Pancreas (tissue), 10 donors: ENCODE measurements at regions of chr17 and their contacts with region 1.

Region 1: GRCh38 chr17:27879987-27880608 is 13.1 kb downstream of the LYRM9 start:
- DNase-seq: peak; percentile 59 to 89 (median 74)
- ATAC-seq: peak; percentile 92 to 99 (median 98)
- H3K4me3 ChIP-seq: no peak overlapping the region
- H3K27ac ChIP-seq: no peak overlapping the region
- H3K4me1 ChIP-seq: no peaks in the 10 kb centered on the region
- H3K27me3 ChIP-seq: no peaks in the 10 kb centered on the region
- CTCF ChIP-seq: peak; percentile 61 to 82 (median 75)

Region 2: GRCh38 chr17:27666831-27667560 is 213.1 kb before region 1 on chr17:
- intact Hi-C with region 1: loop called in 1 of 3 experiments (anchors 10 kb)
- DNase-seq: peak in 1 of 6 donors; percentile 49
- ATAC-seq: no peak
- H3K4me3 ChIP-seq: no peak overlapping the region
- H3K27ac ChIP-seq: no peak overlapping the region
- H3K4me1 ChIP-seq: no peaks in the 10 kb centered on the region
- H3K27me3 ChIP-seq: no peaks in the 10 kb centered on the region
- CTCF ChIP-seq: no peak

Region 3: GRCh38 chr17:27760069-27760885 is 119.8 kb before region 1 on chr17:
- intact Hi-C with region 1: loop called in 1 of 3 experiments (anchors 5 kb)
- DNase-seq: peak; percentile 35 to 93 (median 74)
- ATAC-seq: peak; percentile 69 to 84 (median 79)
- H3K4me3 ChIP-seq: no peak overlapping the region
- H3K27ac ChIP-seq: no peak overlapping the region
- H3K4me1 ChIP-seq: no peaks in the 10 kb centered on the region
- H3K27me3 ChIP-seq: no peaks in the 10 kb centered on the region
- CTCF ChIP-seq: peak; percentile 80 to 96 (median 93)

Region 4: DNA sequence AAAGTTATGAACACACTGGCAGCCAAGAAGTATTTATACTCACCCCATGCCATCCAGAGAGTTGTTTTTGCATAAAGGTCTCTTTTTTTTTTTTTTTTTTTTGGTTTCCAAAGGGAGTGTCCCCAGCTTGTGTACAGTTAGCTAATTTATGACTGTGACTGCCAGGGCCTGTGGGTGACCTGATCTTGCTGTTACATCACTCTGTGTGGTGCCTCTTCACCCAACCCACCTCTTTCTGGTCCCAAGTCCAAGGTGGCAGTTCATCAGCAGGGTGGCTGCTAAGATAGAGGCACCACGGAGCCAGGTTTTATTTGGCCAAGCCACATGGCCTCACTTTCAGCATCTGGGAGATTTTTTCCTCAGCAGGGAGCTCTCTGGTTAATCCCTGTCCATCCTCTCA is 79.6 kb before region 1 on chr17 and contains the start of gene NOS2:
- intact Hi-C with region 1: loop called (anchors 2 to 10 kb)
- DNase-seq: no peak
- ATAC-seq: no peak
- H3K4me3 ChIP-seq: no peak within 1 kb of the TSS
- H3K27ac ChIP-seq: no peak within 1 kb of the TSS
- H3K4me1 ChIP-seq: no peaks in the 10 kb centered on the region
- H3K27me3 ChIP-seq: no peaks in the 10 kb centered on the region
- CTCF ChIP-seq: no peak
- total RNA-seq, gene NOS2: 0.03 to 0.43 (median 0.06) TPM in 5 of 6 donors, not detected in the other

Region 5: DNA sequence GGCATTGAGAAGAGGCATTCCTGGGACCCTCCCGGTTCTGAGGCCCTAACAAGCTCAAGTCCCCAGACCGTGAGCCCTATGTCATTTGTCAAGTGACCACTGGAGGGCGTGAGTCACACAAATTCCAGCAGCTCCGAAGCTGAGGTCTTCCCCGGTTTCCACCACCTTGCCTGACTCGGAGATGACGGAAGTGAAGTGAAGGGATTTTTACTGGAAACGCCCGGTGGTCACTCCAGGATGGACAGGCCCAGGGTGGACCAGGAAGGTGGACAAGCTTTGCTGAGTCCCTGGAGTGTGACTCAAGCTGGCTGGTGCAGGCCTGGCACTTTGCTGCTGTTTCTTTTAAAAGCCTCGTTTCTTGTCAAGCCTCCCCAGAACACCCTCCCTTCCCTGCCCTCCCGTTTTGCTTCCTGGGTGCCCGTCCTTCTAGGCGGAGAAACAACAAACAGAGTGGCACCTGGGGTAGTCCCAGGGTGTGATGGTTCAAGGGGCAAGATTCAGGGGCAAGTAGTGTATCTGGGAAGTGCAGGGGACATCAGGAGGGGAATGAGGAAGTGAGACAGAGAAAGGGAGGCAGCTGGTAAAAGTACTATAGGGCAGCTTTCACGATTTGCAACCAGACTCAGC is 74.5 kb before region 1 on chr17:
- intact Hi-C with region 1: loop called (anchors 2 to 10 kb)
- DNase-seq: peak; percentile 80 to 91 (median 82)
- ATAC-seq: peak; percentile 93 to 98 (median 98)
- H3K4me3 ChIP-seq: peak overlapping the region in 2 of 4 donors; percentile 27 to 32
- H3K27ac ChIP-seq: peak overlapping the region; percentile 10 to 73 (median 49)
- H3K4me1 ChIP-seq: peaks cover 0 to 6% (median 0%) of the 10 kb centered on the region in 3 donors
- H3K27me3 ChIP-seq: no peaks in the 10 kb centered on the region
- CTCF ChIP-seq: peak; percentile 73 to 86 (median 84)

Region 6: DNA sequence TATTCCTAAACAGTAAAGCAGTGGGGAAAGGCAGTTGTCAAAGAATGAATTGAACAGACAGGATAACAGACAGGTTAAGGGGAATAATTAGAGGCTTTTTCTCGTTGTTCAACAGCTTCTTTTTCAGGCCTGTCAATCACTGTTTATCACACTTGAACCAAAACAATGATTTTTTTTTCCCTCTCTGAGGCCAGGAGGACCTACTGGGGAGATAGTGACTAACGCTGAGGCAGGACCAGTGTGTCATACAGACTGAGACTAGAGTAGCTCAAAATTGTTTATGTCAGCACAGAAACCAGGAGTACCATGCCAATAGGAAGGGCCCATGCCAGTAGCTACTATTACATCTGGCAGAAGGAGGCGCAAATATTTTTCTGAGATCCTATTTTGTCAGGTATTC is 121.1 kb after region 1 on chr17:
- intact Hi-C with region 1: no loop called
- DNase-seq: no peak
- ATAC-seq: no peak
- H3K4me3 ChIP-seq: no peak overlapping the region
- H3K27ac ChIP-seq: no peak overlapping the region
- H3K4me1 ChIP-seq: no peaks in the 10 kb centered on the region
- H3K27me3 ChIP-seq: no peaks in the 10 kb centered on the region
- CTCF ChIP-seq: no peak

Region 7: DNA sequence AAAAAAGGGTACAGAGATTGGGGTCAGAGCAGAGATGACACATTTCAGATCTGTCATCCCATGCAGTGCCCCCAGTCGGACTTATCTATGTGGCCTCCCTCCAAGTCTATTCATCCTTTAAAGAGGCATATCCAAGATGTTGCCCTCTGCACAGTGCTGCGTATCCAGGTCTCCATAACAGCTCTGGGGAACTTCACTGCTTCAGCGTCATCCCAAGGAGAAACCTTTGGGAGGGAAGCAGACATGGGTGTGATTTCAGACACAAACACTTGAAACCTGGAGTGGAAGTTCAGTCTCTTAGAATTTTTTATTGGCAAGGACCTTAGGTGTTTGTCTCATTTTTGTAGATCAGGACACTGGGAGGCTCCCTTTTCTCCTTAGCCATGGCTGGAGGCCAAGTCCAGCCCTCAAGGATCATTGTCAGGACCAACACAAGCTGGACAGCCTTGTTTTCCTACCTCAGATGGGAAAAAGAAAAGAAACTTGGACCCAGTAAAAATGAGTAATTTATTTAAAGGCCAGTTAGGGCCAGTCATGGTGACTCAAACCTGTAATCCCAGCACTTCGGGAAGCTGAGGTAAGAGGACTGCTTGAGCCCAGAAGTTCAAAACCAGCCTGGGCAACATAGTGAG is 138.5 kb after region 1 on chr17:
- intact Hi-C with region 1: no loop called
- DNase-seq: no peak
- ATAC-seq: peak in 1 of 4 donors; percentile 20
- H3K4me3 ChIP-seq: no peak overlapping the region
- H3K27ac ChIP-seq: no peak overlapping the region
- H3K4me1 ChIP-seq: no peaks in the 10 kb centered on the region
- H3K27me3 ChIP-seq: no peaks in the 10 kb centered on the region
- CTCF ChIP-seq: no peak